ENCODE measurements at regions of chr15 and their contacts with region 1.

Region 1: DNA sequence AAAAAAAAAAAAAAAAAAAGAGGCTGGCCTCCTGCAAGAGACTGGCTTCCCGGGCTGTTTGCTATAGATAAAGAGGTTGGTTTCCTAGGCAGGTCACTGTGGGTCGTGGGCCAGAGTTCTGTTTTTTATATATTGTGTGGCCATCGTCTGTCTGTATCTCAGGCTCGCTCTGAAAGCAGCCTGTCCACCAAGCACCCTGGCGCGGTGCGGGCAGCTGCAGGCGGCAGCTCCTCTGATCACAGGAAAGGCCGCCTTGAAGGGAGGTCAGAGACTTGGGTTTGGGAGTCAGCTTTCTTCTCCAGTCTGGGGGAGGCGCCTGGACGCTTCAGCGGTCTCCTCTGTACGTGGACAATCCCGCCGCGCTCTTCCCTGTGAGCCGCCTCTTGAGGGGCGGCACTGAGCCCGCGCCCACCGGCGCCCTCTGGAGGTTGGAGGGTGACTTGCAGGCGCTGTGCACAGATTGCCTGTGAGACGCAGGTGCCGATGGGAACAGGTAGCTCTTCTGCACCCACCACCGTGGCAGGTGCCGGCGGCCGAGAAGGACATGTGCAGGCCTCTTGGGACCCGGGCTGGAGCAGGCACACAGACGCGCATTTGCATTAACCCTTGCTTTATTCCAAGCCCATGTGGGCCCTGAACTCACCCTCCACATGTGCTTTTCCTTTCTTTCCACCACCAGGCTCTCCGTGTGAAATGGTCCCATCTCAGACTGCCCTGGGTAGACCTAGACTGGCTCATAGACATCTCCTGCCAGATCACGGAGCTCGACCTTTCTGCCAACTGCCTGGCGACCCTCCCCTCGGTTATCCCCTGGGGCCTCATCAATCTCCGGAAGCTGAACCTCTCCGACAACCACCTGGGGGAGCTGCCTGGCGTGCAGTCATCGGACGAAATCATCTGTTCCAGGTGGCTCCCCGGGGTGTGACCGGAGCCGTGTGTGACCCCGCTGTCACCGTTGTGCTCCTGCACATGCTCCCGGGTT is 89.3 kb downstream of the LRRK1 start:
- DNase-seq: peak; percentile 89
- H3K4me3 ChIP-seq: peak overlapping the region; percentile 43 to 59
- H3K27ac ChIP-seq: no peak overlapping the region; a peak in 1 of 4 replicates
- H3K4me1 ChIP-seq: peaks cover 0 to 4% of the 10 kb centered on the region in 2 experiments; a peak in 1 of 4 replicates
- H3K27me3 ChIP-seq: no peaks in the 10 kb centered on the region
- CTCF ChIP-seq: peak; percentile 92
- EP300 ChIP-seq: no peak
- RAD21 ChIP-seq: peak; percentile 60

Region 2: DNA sequence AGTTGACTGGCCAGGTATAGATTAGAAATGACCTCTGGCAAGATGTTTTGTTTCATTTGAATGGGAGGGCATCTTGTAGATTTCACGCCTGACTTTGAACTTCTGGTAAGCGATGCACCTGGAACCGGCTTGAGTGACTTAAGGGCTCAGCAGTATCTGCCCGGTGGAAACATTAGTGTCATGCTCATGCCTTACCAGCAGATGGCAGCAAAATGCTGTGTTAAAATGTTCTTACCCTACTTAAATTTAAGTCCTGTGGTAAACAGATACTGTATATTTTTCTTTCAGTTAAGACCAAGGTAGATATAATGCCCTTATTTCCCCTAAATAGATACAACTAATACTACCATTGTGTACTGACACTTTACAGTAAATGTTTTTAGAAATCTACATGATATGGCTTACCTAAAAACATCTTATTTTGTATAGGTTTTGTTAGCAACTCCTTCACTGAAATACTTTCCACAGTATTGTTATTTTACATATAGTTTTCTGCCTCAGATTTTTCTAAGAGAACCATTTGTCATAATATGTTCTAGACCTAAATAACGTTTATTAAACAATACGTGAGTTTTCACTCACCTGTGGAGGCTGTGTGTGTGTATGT is 380.6 kb before region 1 on chr15:
- CTCF ChIA-PET with region 1: interaction called, 102 read pairs
- POLR2A ChIA-PET with region 1: no interaction called
- DNase-seq: peak; percentile 75
- H3K4me3 ChIP-seq: no peak overlapping the region
- H3K27ac ChIP-seq: no peak overlapping the region
- H3K4me1 ChIP-seq: peaks cover 0 to 7% of the 10 kb centered on the region in 2 experiments; a peak in 1 of 4 replicates
- H3K27me3 ChIP-seq: no peaks in the 10 kb centered on the region
- CTCF ChIP-seq: peak; percentile 83
- EP300 ChIP-seq: no peak
- RAD21 ChIP-seq: peak; percentile 94

Region 3: DNA sequence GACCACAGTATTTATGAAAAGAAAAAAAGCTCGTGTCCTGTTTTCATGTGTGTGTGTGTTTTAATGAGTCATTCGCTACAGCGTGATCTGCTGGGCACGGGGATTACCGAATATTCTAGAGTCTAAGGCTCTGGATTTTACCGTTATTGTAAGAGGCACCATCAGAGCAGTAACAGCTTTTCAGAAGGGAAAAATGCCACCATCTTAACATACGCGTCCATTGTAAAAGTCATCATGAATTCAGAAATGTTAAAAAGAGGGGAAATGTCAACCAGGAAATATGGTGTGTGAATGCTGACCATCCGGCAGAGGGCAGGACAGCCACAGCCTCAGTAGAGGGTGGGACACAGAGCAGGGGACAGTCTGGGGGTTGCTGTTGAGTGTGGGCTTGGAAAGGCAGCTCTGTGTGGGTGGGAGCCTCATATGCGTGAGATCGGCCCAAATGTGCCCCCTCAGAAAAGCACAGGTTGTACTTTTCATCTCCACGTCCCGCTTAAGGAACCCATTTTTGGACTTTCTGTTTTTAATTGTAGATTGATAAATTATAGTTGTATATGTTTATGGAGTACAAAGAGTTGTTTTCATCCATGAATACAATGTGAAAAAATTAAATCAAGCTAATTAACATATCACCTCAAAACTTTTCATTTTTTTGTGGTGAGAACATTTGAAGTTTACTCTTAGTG is 336.4 kb before region 1 on chr15:
- CTCF ChIA-PET with region 1: interaction called, 56 read pairs
- POLR2A ChIA-PET with region 1: no interaction called
- DNase-seq: peak; percentile 85
- H3K4me3 ChIP-seq: no peak overlapping the region
- H3K27ac ChIP-seq: peak overlapping the region in 1 of 2 experiments; percentile 74; a peak in 2 of 4 replicates
- H3K4me1 ChIP-seq: peaks cover 0 to 23% of the 10 kb centered on the region in 2 experiments; a peak in 2 of 4 replicates
- H3K27me3 ChIP-seq: no peaks in the 10 kb centered on the region
- CTCF ChIP-seq: peak; percentile 76
- EP300 ChIP-seq: no peak
- RAD21 ChIP-seq: peak; percentile 93

Region 4: DNA sequence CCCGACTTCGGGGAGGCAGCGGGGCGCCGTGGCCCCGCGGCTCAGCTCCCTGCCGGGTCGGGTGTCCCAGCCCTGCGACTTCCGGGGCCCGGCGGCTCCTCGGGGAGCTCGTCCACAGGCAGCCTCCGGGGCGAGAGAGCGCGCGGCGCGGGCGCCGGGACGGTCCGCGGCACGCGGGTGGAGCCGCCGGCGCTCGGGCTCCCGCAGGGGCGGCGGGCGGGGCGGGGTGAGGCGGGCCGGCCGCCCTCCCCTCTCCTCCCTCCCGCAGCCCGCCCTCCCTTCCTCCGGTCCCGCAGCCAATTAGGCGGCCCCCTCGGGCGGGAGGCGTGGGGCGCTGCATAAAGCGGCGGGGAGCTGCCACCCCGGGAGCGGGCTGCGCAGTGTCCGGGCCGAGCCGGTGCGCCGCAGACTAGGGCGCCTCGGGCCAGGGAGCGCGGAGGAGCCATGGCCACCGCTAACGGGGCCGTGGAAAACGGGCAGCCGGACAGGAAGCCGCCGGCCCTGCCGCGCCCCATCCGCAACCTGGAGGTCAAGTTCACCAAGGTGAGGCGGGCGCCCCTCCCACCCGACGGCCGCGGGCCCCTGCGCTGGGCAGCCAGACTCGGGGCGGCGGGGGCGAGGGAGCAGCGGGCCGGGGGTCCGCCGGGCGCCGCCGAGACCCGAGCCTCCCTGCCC is 128.8 kb before region 1 on chr15 and contains the start of gene ALDH1A3:
- CTCF ChIA-PET with region 1: interaction called, 45 read pairs
- POLR2A ChIA-PET with region 1: no interaction called
- DNase-seq: peak; percentile 92
- H3K4me3 ChIP-seq: peak within 1 kb of the TSS; percentile 37 to 57; a peak in 3 of 4 replicates
- H3K27ac ChIP-seq: peak within 1 kb of the TSS in 1 of 2 experiments; percentile 73; a peak in 2 of 4 replicates
- H3K4me1 ChIP-seq: peaks cover 0 to 39% of the 10 kb centered on the region in 2 experiments; a peak in 1 of 4 replicates
- H3K27me3 ChIP-seq: no peaks in the 10 kb centered on the region
- CTCF ChIP-seq: no peak
- EP300 ChIP-seq: no peak
- RAD21 ChIP-seq: no peak
- polyA plus RNA-seq, gene ALDH1A3: 3.1 and 4.4 TPM in 2 replicates

Region 5: DNA sequence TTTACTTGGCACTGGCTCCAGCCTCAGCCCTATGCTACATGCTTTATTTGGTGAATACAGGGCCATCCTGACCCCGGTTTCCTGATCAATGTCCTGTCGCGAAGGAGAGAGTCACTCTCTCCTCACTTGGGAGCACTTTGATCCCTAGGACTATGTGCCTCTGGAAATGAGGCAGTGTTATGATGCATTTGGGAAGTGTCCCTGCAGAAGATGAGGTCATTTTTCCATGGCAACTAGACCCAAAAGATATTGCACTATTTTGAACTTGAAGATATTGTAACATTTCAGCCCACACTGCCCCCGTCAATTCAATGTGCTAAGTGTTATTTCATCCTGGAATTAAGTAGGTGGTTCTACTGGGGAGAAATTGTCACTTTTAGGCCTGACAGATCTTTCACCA is 21.3 kb before region 1 on chr15:
- CTCF ChIA-PET with region 1: interaction called, 42 read pairs
- POLR2A ChIA-PET with region 1: no interaction called
- DNase-seq: no peak
- H3K4me3 ChIP-seq: no peak overlapping the region
- H3K27ac ChIP-seq: no peak overlapping the region
- H3K4me1 ChIP-seq: no peaks in the 10 kb centered on the region; a peak in 2 of 4 replicates
- H3K27me3 ChIP-seq: no peaks in the 10 kb centered on the region
- CTCF ChIP-seq: no peak
- EP300 ChIP-seq: no peak
- RAD21 ChIP-seq: no peak

Region 6: GRCh38 chr15:101251830-101252820 is 243.7 kb after region 1 on chr15 and contains the start of gene CHSY1:
- CTCF ChIA-PET with region 1: interaction called, 44 read pairs
- POLR2A ChIA-PET with region 1: interaction called, 4 read pairs
- DNase-seq: peak; percentile 94
- H3K4me3 ChIP-seq: peak within 1 kb of the TSS; percentile 69 to 89
- H3K27ac ChIP-seq: peak within 1 kb of the TSS; percentile 52 to 90
- H3K4me1 ChIP-seq: peaks cover 4 to 27% of the 10 kb centered on the region in 2 experiments; a peak in 2 of 4 replicates
- H3K27me3 ChIP-seq: no peaks in the 10 kb centered on the region
- CTCF ChIP-seq: peak; percentile 18; the same call in 1 of the 2 replicates
- EP300 ChIP-seq: peak in 1 of 2 experiments; percentile 32; a peak in 2 of 4 replicates
- RAD21 ChIP-seq: peak; percentile 47
- polyA plus RNA-seq, gene CHSY1: 15.7 and 17.4 TPM in 2 replicates